ENCODE measurements at regions of chr21 and their contacts with region 1.

Region 1: DNA sequence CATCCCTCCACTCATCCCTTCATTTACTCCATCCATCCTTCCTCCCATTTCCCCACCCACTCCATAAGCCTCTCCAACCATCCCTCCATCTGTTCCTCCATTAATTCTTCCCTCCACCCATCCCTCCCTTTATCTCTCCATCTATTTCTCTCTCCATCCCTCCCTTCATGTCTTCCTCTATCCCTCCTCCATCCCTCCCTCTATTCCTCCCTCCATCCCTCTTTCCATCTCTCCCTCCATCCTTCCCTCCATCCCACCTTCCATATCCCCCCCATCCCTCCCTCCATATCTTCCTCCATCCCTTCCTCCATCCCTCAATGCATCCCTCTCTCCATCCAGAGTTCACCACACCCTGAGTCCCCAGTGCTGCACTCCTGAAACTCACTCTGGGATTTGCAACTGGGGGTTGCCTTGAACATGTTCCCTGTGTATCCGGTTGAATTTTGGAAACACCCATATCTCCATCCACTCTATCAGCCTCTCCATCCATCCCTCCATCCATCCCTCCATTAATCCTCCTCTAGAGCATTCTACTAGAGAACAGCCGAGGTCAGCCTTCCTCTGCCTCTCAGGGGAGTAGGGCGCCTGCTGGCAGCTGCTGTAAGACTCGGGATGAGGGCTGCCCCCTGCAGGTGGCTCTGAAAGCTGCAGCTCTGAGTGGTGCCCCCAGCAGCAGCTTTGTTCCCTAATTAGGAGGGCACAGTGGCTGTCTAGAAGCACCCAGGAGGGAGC is 39.4 kb downstream of the ABCG1 start:
- DNase-seq: peak; percentile 83
- H3K4me3 ChIP-seq: no peak overlapping the region
- H3K27ac ChIP-seq: no peak overlapping the region
- H3K4me1 ChIP-seq: no peaks in the 10 kb centered on the region
- H3K27me3 ChIP-seq: no peaks in the 10 kb centered on the region
- CTCF ChIP-seq: peak; percentile 85

Region 2: DNA sequence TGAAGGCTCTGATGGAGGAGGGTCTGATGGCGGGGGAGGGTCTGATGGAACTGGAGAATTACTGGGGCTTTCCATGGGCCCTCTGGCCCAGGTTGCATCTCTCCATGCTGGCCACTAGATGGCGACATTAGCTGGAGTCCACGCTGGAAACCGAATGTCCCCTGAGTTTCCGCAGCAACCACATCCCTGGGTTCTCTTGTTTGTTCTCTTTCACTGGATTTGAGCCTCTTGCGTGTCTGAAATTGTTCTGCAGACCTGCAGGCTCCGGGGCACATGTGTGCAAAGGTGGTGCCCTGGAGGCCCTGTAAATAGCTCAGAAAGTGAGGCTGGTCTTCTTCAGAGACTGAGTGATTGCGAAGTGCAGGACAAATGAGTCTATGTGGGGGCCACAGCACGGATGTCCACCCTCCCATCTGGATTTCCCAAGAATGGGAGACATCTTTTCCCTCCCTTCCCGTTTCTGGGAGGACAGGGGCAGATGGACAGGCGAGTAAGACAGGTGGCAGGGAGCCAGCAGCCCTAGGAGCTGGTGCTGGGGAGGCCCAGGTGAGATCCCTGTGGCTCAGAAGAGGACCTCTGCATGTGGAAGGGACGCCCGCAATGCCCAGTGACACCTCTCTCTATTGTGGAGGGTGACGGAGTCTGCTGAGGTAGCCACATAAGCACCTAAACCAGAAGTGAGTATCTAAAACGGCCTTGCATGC is 112.6 kb before region 1 on chr21:
- intact Hi-C with region 1: loop called (anchors 5 kb)
- DNase-seq: peak; percentile 65
- H3K4me3 ChIP-seq: no peak overlapping the region
- H3K27ac ChIP-seq: no peak overlapping the region
- H3K4me1 ChIP-seq: peaks cover 4% of the 10 kb centered on the region
- H3K27me3 ChIP-seq: no peaks in the 10 kb centered on the region
- CTCF ChIP-seq: peak; percentile 89

Region 3: DNA sequence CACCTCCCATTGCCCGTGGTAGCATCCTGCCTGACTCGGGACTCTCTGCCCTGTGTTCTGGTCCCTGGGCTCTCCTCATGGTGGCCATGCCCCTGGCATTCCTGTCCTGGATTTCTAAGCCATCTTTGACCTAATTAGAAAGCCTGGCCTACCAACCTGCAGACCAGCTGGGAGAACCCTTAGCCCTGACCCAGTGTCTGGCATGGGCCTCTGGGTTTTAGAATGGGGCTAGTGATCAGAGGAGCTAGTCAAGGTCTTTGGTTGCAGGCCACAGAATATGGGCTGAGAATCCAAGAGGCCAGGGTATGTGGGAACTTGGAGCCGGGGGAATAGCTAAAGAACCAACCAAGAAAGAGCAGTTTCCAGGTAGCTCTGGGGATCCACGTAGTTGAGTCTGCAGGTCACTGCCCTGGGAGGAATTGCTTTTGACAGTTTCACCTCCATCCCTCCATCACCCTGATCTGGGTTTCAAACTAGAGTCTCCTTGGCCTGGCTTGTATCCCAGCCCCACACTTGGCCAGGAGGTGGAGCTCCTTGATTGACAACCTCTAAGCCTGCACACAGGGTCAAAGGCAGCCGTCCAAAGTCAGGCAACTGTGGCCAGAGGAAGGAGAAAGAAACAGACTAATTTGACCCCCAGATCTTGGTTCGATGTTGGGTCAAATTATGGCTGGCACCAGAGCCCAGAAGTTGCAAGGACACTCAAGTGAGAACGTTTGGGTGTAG is 94.1 kb before region 1 on chr21:
- intact Hi-C with region 1: loop called (anchors 1 kb)
- DNase-seq: peak; percentile 88
- H3K4me3 ChIP-seq: no peak overlapping the region
- H3K27ac ChIP-seq: peak overlapping the region; percentile 87
- H3K4me1 ChIP-seq: no peaks in the 10 kb centered on the region
- H3K27me3 ChIP-seq: no peaks in the 10 kb centered on the region
- CTCF ChIP-seq: peak; percentile 50

Region 4: DNA sequence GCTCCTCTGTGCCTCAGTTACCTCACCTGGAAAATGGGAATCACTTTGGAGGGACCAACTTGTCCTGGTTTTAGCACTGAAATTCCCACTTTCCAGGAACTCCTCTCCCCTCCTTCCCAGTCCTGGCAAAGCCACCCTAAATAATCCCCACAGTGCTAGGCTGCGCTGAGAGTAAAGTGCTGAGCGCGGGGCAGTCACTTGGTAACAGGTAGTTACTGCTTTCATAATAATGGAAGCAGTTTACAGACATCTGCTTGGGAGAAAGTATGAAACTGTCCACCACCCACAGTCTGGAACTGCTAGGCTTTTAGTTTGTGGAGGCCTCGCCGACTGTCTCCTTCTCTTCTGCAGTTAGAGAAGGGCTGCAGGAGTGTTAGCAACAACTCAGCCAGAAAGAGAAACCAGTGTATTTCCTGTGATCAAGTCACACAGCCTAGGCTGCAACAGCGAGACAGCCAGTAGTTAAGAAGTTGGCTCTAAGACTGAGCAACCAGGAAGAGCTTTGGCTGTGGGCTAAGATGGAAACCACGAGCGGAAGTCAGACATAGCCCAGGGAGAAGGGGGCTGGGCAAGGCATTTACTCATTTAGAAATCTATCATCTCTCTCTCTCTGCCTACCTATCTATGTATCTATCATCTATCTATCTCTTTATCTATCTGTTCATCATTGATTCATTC is 70.2 kb before region 1 on chr21:
- intact Hi-C with region 1: no loop called
- DNase-seq: no peak
- H3K4me3 ChIP-seq: no peak overlapping the region
- H3K27ac ChIP-seq: peak overlapping the region; percentile 62
- H3K4me1 ChIP-seq: no peaks in the 10 kb centered on the region
- H3K27me3 ChIP-seq: no peaks in the 10 kb centered on the region
- CTCF ChIP-seq: no peak